ENCODE measurements at regions of chr19 and their contacts with region 1.

Region 1: GRCh38 chr19:36528194-36528920 is at the start of gene ZNF260:
- DNase-seq: peak; percentile 86 to 92
- H3K4me3 ChIP-seq: peak within 1 kb of the TSS; percentile 80
- H3K27ac ChIP-seq: peak within 1 kb of the TSS; percentile 74
- H3K4me1 ChIP-seq: peaks cover 6% of the 10 kb centered on the region; the same call in 1 of the 2 replicates
- H3K27me3 ChIP-seq: no peaks in the 10 kb centered on the region
- CTCF ChIP-seq: no peak
- total RNA-seq, gene ZNF260: 9.4 and 10.6 TPM in 2 replicates

Region 2: DNA sequence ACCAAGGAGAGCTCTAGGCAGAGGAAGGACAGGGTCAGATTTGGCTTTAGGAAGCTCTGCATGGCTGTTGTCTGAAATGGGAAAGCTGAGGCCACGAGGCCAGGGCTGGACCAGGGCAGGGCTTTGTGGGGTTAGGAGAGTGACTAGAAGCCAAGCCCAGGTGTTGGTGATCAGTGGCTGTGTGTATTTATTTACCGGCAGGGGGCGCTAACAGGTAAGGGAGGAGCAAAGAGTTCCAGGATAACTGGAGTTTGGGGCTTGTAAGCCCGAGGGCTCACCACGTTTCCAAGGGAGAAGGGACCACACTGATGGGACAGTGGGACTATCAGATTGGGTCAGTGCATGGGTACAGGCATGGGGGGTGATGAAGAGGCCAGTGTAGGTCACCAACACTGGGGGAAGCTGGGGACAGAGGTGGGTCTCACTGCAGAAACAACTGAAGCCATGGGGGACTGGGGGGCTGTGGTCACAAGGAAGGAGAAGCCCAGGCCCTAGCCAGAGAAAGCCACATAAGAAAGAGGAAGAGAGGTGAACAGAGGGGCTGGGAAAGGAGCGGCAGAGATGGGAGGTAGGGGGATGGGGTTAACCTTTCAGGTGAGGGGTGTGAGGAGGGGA is 979.1 kb before region 1 on chr19:
- CTCF ChIA-PET with region 1: no interaction called
- POLR2A ChIA-PET with region 1: no interaction called
- intact Hi-C with region 1: no loop called
- DNase-seq: peak; percentile 46 to 50
- H3K4me3 ChIP-seq: no peak overlapping the region
- H3K27ac ChIP-seq: no peak overlapping the region
- H3K4me1 ChIP-seq: peaks cover 10% of the 10 kb centered on the region
- H3K27me3 ChIP-seq: no peaks in the 10 kb centered on the region
- CTCF ChIP-seq: peak; percentile 88

Region 3: DNA sequence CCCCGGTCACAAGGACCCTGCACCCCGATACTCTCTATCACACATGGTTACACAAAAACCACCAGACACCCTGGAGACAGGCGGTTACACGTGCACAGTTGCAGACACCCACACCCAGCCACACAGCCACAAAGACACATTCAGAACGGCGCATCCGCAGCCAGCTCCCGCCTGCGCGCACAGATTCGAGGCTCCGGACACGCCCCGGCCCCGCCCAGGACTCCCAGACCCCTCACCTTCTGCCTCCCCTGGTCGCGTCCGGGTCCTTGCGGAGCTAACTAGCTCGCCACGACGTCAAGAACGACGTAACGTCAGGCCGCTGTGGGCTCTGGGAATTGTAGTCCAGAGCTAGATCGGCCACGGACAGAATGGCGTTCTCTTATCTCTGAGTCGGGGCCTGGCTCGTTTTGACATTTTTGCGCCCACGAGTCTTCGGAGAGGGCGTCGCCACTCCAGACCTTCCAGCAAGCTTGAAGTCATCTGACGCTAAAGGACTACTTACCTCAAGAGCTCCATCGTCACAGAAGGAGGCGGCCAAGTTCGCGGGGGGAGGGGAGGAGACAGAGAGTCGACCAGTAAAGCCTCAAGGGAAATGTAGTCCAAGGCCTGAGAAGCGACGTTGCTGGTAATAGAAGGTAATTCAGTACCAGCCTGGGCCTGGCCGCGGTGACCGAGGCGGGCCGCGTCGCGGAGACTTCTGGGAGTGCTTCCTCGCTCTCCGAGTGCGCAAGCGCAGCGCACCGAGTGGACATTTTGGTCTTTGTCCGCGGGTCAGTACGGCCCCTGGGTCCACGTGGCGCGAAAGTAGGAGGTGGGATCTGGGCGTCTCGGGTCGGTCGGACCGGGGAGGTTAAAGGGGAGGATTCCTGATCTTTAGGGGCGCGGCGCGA is 313.7 kb before region 1 on chr19 and contains the starts of genes ZNF146 and ZNF565:
- CTCF ChIA-PET with region 1: no interaction called
- POLR2A ChIA-PET with region 1: no interaction called
- intact Hi-C with region 1: loop called (anchors 1 kb)
- DNase-seq: peak; percentile 95
- H3K4me3 ChIP-seq: peak within 1 kb of the TSS; percentile 70
- H3K27ac ChIP-seq: peak within 1 kb of the TSS; percentile 57
- H3K4me1 ChIP-seq: peaks cover 5% of the 10 kb centered on the region
- H3K27me3 ChIP-seq: no peaks in the 10 kb centered on the region
- CTCF ChIP-seq: no peak
- total RNA-seq, gene ZNF146: 53.1 and 68.0 TPM in 2 replicates
- total RNA-seq, gene ZNF565: 3.3 and 4.3 TPM in 2 replicates

Region 4: DNA sequence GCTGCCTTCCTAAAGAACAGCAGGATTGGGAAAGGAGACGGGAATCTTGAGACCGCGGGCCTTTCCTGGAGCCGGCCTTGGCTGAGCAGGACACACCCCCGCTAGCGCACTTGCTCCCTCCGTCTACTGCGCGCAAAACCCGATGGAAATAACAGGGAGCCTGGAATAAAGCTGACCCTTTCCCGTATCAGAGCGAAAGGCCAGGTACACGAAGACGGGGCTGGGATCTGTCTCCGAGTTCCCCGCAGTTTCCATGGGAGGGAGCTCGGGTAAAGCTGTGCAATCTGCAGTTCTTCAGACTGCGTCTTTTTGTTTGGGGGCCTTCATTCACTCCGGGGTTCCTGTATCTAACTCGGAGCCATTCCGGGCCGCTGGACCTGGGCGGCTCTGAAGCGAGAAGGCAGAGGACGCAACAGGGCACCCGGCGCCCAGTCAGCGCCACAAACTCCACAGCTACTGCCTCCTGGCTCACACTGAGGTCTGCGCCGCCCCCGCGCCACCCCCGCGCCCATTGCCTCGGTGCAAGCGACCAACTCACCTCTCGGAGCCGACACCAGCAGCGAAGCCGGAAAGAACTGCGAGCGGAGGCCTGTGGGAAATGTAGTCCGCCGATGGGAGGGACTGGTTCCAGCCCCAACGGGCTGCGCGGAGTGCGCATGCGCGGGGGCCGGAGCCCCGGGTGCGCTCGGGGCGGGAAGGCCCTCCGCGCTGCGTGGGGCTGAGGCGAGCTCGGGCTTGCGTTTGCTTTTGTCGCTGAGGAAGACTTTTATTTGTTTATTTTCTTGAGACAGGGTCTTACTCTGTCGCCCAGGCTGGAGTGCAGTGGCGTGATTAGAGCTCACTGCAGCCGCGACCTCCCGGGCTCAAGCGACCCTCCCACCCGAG is 149.5 kb before region 1 on chr19 and contains the start of gene ZFP14:
- CTCF ChIA-PET with region 1: no interaction called
- POLR2A ChIA-PET with region 1: no interaction called
- intact Hi-C with region 1: loop called (anchors 1 kb)
- DNase-seq: peak; percentile 83 to 93
- H3K4me3 ChIP-seq: peak within 1 kb of the TSS; percentile 83
- H3K27ac ChIP-seq: peak within 1 kb of the TSS; percentile 41
- H3K4me1 ChIP-seq: peaks cover 7% of the 10 kb centered on the region
- H3K27me3 ChIP-seq: no peaks in the 10 kb centered on the region
- CTCF ChIP-seq: peak; percentile 36; the same call in 1 of the 2 replicates
- total RNA-seq, gene ZFP14: 5.9 and 6.7 TPM in 2 replicates

Region 5: GRCh38 chr19:36489118-36489919 is 39.0 kb before region 1 on chr19 and contains the start of gene ZNF566:
- CTCF ChIA-PET with region 1: no interaction called
- POLR2A ChIA-PET with region 1: no interaction called
- intact Hi-C with region 1: loop called (anchors 2 kb)
- DNase-seq: peak; percentile 94 to 95
- H3K4me3 ChIP-seq: peak within 1 kb of the TSS; percentile 87
- H3K27ac ChIP-seq: peak within 1 kb of the TSS; percentile 96
- H3K4me1 ChIP-seq: peaks cover 6% of the 10 kb centered on the region; the same call in 1 of the 2 replicates
- H3K27me3 ChIP-seq: no peaks in the 10 kb centered on the region
- CTCF ChIP-seq: no peak
- total RNA-seq, gene ZNF566: 6.0 and 7.9 TPM in 2 replicates

Region 6: GRCh38 chr19:36514012-36514612 is 14.2 kb before region 1 on chr19:
- CTCF ChIA-PET with region 1: no interaction called
- POLR2A ChIA-PET with region 1: no interaction called
- intact Hi-C with region 1: no loop called
- DNase-seq: no peak
- H3K4me3 ChIP-seq: peak overlapping the region; percentile 10; the same call in 1 of the 2 replicates
- H3K27ac ChIP-seq: no peak overlapping the region
- H3K4me1 ChIP-seq: no peaks in the 10 kb centered on the region
- H3K27me3 ChIP-seq: no peaks in the 10 kb centered on the region
- CTCF ChIP-seq: no peak

Region 7: GRCh38 chr19:36573020-36573885 is 44.9 kb after region 1 on chr19 and contains the start of gene ZNF529:
- CTCF ChIA-PET with region 1: no interaction called
- POLR2A ChIA-PET with region 1: interaction called, 10 read pairs
- intact Hi-C with region 1: loop called (anchors 1 kb)
- DNase-seq: peak; percentile 84 to 87
- H3K4me3 ChIP-seq: peak within 1 kb of the TSS; percentile 90
- H3K27ac ChIP-seq: peak within 1 kb of the TSS; percentile 55
- H3K4me1 ChIP-seq: peaks cover 6% of the 10 kb centered on the region; the same call in 1 of the 2 replicates
- H3K27me3 ChIP-seq: no peaks in the 10 kb centered on the region
- CTCF ChIP-seq: no peak
- total RNA-seq, gene ZNF529: 4.0 and 4.2 TPM in 2 replicates

Region 8: GRCh38 chr19:36687214-36688056 is 159.1 kb after region 1 on chr19 and contains the start of gene ZNF567:
- CTCF ChIA-PET with region 1: no interaction called
- POLR2A ChIA-PET with region 1: no interaction called
- intact Hi-C with region 1: loop called (anchors 1 kb)
- DNase-seq: peak; percentile 89 to 98
- H3K4me3 ChIP-seq: peak within 1 kb of the TSS; percentile 82
- H3K27ac ChIP-seq: peak within 1 kb of the TSS; percentile 38
- H3K4me1 ChIP-seq: no peaks in the 10 kb centered on the region; the same call in 1 of the 2 replicates
- H3K27me3 ChIP-seq: no peaks in the 10 kb centered on the region
- CTCF ChIP-seq: no peak
- total RNA-seq, gene ZNF567: 7.0 and 7.9 TPM in 2 replicates